ENCODE measurements at regions of chr16 and their contacts with region 1.

Region 1: DNA sequence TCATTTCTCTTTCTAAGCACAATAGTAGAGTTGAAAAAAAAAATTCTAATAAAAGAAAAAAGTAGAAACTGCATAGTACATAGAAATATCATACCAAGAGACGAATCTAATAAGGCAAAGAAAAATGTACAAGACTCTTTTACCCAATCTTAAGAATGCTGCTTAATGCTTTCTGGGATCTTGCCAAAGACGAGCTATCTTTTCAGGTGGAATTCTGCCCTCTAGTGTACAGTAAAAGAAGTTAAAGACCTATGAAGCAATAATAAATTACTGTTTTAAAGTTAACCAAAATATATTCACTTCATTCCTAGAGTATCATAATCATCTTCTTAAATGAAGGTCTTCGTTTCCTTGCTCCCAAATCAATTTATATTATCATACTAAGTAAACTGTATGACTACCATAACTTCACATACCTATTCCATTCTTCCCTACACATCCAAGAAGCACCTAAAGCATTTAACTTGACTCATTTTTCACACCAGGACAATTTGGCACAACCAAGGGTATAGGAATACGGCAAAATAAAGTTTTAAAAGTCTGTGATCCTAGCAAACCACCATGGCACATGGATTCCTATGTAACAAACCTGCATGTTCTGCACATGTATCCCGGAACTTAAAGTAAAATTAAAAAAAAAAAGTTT is 47.7 kb downstream of the CFDP1 start:
- DNase-seq: no peak
- H3K4me3 ChIP-seq: no peak overlapping the region
- H3K27ac ChIP-seq: no peak overlapping the region
- H3K4me1 ChIP-seq: peaks cover 0 to 48% (median 18%) of the 10 kb centered on the region in 3 donors
- H3K27me3 ChIP-seq: no peaks in the 10 kb centered on the region
- CTCF ChIP-seq: peak; percentile 45 to 85 (median 64)
- POLR2A ChIP-seq: no peak

Region 2: DNA sequence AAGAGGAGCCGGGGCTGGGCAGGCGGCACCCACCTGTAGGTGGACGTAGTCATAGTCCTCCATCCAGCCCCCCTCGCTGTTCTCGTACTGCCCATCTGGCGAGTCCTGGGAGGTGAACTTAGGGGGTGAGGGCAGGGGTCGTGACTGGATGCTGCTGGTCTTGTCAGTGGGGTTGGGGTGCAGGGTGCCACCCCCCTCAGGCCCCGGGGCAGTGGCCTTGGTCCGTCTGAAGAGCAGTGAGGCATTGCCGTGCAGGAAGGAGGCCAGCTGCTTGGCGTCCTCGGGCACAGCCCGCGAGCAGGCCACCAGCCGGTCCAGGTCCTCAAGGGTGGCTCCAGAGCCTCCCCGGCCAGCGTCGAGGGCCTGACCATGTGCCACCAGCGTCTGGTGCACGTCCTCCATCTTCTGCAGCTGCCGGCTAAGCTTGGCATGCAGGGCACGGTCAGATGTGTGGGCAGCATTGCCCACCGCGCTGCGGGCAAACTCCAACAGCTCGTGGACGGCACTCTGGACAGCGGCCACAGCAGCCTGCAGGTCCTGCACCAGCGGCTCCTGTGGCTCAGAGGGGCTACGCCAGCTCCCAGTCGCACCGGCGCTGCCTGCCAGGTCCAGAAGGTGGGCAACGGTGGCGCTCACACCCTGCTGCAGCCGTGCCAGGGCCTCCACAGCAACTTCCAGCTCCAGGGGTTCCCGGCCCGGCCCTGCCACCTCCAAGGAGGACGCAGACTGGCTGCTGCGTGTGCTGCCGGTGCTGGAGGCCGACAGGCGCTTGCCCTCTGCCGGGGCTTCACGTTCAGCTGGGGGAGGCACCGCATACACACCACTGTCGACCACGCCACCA is 150.6 kb before region 1 on chr16:
- intact Hi-C with region 1: loop called (anchors 5 kb)
- DNase-seq: no peak
- H3K4me3 ChIP-seq: no peak overlapping the region
- H3K27ac ChIP-seq: peak overlapping the region in 2 of 4 donors; percentile 30 to 72
- H3K4me1 ChIP-seq: peaks cover 15 to 43% (median 30%) of the 10 kb centered on the region in 3 donors
- H3K27me3 ChIP-seq: no peaks in the 10 kb centered on the region
- CTCF ChIP-seq: no peak
- POLR2A ChIP-seq: no peak